ENCODE measurements at regions of chr17 and their contacts with region 1.

Region 1: DNA sequence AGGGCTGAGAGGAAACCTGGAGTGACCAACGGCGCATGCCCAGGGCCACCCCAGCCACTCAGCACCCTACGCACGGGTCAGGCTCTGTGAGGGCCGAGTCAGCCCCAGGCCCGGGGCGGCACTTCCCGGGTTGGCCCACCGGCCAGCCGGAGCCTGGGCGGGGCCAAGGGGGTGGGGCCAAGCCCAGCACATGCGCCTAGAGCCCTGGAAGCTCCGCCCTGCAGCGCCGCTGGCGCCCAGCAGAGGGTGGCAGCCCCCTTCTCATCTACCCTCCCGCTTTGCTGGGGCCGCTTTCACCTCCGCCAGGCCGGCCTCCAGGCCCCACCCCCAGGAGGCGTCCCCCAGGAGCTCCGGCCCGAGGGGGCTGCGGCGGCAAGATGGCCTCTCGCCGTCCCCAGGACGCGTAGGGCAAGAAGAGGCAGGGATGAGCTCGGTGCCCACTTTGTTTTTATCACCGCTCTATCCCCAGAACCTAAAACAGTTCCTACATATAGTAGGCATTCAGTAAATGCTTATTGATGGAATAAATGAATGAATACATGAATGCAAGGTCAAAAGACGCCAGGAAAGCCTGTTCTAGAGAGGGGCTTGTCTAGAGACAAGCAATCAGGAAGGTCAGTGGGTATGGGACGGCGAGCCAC is 31.3 kb downstream of the MYO18A start:
- DNase-seq: peak; percentile 95
- H3K4me3 ChIP-seq: peak overlapping the region; percentile 58
- H3K27ac ChIP-seq: peak overlapping the region; percentile 46
- H3K4me1 ChIP-seq: peaks cover 47% of the 10 kb centered on the region
- CTCF ChIP-seq: peak; percentile 85

Region 2: DNA sequence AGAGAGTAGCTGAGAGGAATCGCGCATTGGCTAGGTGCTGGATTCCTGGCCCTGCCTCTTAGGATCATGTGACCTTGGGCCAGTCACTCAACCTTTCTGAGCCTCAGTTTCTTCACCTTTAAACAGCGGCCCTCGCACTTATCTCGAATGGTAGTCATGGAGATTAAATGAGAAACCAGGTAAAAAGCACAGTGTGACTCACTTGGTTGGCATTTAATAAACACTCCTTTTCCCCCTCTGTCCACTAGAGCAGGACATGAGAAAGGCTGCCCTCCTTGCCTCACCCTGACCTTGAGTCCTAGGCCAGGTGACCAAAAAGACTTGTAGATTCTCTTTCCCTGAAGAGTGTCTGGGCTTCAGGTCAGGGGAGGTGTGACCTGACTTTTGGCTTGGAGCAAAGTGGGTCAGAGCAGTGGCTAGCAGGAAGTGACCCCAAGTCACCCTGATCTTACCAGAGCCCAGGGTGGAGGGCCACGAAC is 40.9 kb before region 1 on chr17:
- CTCF ChIA-PET with region 1: no interaction called
- POLR2A ChIA-PET with region 1: no interaction called
- intact Hi-C with region 1: no loop called
- DNase-seq: no peak
- H3K4me3 ChIP-seq: no peak overlapping the region
- H3K27ac ChIP-seq: no peak overlapping the region
- H3K4me1 ChIP-seq: no peaks in the 10 kb centered on the region
- CTCF ChIP-seq: no peak

Region 3: DNA sequence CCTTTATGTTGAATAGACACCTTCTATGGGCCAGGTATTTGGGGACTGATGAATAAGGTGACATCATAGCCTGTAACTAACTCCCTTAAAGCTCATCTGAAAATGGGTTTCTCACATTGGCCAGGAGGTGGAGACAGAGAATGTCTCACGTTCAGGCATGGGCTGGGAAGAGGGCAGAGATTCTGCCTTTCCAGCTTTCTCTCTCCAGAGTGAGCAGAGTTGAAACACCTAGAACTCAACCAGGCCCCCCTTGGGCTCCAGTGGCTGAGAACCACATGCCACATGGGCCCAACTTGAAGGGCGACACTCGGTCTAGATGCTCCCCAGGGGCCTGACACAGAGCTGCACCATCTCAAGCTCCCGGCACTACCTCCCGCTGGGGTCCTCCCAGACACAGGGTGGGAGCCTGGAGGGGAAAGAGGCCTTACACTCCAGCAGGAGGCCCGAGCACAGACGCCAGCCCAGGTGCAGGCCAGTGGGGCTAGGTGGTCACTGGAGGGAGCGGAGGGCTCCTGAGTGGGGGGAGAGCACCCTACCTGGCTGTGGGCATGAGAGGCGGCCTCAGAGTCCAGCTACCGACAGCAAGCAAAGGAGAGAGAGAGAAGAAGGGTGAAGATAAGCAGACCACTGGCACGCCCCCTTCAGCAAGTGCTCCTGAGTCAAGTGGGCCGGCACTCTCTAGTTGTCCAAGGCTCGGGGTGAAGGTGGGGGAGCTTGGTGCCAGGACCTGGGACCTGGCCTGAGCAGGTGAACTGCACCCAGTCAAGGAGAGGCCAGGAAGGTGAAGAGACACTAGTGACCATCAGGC is 24.6 kb before region 1 on chr17:
- CTCF ChIA-PET with region 1: interaction called, 10 read pairs
- POLR2A ChIA-PET with region 1: interaction called, 5 read pairs
- intact Hi-C with region 1: loop called (anchors 1 kb)
- DNase-seq: peak; percentile 71
- H3K4me3 ChIP-seq: no peak overlapping the region
- H3K27ac ChIP-seq: no peak overlapping the region
- H3K4me1 ChIP-seq: no peaks in the 10 kb centered on the region
- CTCF ChIP-seq: peak; percentile 84

Region 4: GRCh38 chr17:29169806-29170591 is 21.1 kb after region 1 on chr17:
- CTCF ChIA-PET with region 1: no interaction called
- POLR2A ChIA-PET with region 1: no interaction called
- intact Hi-C with region 1: no loop called
- DNase-seq: no peak
- H3K4me3 ChIP-seq: no peak overlapping the region
- H3K27ac ChIP-seq: no peak overlapping the region
- H3K4me1 ChIP-seq: no peaks in the 10 kb centered on the region
- CTCF ChIP-seq: no peak

Region 5: GRCh38 chr17:29180034-29180787 is 31.3 kb after region 1 on chr17 and contains the start of gene MYO18A:
- CTCF ChIA-PET with region 1: interaction called, 23 read pairs
- POLR2A ChIA-PET with region 1: interaction called, 8 read pairs
- intact Hi-C with region 1: loop called (anchors 1 kb)
- DNase-seq: peak; percentile 88
- H3K4me3 ChIP-seq: peak within 1 kb of the TSS; percentile 68
- H3K27ac ChIP-seq: no peak within 1 kb of the TSS
- H3K4me1 ChIP-seq: peaks cover 45% of the 10 kb centered on the region
- CTCF ChIP-seq: peak; percentile 79
- total RNA-seq, gene MYO18A: 124 and 131 TPM in 2 replicates

Region 6: DNA sequence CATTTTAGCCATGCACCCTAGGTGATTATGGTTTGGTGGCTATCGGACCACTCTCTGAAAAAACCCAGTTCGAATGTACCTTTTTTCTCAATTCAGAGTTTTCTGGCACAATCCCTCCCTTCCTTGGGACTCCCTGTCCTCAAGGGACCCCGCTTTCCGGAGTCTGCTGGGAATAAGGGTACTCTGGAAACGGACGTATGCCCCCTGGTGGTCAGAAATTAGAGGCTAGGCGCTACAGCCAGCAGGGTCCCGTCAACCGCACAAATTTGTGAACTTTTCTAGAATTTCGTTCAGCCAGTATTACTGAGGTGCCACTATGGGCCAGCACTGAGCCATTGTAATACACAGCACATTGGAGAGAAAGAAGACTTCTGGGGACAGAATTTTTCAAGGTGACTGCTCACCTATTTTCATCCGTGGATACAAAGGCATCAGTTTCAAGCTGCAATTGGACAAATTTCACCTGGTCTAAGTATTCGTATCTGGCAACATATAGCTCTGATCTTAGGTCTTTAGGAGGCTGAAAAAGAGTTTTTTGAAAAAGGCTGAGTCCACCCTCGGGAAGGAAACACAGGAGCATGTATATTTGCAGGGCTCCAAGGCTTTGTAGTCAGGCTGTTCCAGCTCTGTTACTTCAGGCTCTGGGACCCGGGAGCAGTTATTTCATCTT is 70.6 kb after region 1 on chr17:
- CTCF ChIA-PET with region 1: interaction called, 6 read pairs
- POLR2A ChIA-PET with region 1: interaction called, 5 read pairs
- intact Hi-C with region 1: loop called (anchors 1 kb)
- DNase-seq: peak; percentile 84
- H3K4me3 ChIP-seq: no peak overlapping the region
- H3K27ac ChIP-seq: no peak overlapping the region
- H3K4me1 ChIP-seq: peaks cover 14% of the 10 kb centered on the region
- CTCF ChIP-seq: peak; percentile 100

Region 7: GRCh38 chr17:29293890-29294579 is 145.1 kb after region 1 on chr17 and contains the start of gene NUFIP2:
- CTCF ChIA-PET with region 1: no interaction called
- POLR2A ChIA-PET with region 1: interaction called, 7 read pairs
- intact Hi-C with region 1: loop called (anchors 1 kb)
- DNase-seq: peak; percentile 99
- H3K4me3 ChIP-seq: peak within 1 kb of the TSS; percentile 95
- H3K27ac ChIP-seq: peak within 1 kb of the TSS; percentile 88
- H3K4me1 ChIP-seq: peaks cover 23% of the 10 kb centered on the region
- CTCF ChIP-seq: no peak
- total RNA-seq, gene NUFIP2: 36.0 and 37.1 TPM in 2 replicates

Region 8: DNA sequence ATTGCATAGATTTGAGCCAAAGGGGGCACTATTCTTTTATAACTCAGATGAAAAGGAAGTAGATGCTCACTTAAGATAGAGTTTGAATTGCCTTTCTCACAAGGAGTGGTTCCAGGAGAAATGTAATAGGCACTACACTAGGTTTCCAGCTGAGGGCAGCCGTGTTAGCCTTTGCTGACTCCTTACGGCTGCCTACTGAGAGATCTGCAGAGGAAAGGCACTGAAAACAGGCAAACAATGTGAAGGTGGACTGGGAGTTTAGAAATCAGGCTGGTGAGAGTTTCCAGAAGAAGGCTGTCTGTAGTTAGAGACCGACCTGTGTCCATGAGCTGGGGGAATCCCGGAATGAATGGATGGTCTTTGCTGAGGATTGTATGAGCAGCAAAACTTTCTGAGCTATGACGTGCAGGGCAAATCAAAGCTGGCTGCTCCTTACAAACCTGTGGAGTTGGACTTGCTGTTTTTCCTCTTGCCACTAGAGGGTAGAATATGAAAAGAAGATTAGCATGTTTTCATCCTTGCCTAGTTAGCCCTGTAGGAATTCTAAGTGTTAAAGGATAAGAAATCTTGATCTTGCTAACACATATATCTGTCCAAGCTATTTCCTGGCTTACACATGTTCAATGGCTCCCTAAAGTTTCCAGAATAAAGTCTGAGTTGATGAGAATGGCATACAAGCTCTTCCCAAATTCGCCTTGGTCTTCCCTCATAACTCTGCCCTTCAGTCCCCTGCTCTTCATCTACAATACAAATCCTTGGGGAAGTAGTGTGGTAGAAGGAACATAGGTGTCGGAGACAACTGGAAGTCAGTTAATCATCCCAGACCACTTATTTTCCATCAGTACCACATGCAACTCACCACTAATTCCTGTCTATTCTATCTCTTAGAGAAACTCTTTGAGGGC is 221.2 kb after region 1 on chr17:
- CTCF ChIA-PET with region 1: interaction called, 3 read pairs
- POLR2A ChIA-PET with region 1: no interaction called
- intact Hi-C with region 1: loop called (anchors 10 kb)
- DNase-seq: peak; percentile 86
- H3K4me3 ChIP-seq: peak overlapping the region; percentile 43
- H3K27ac ChIP-seq: no peak overlapping the region
- H3K4me1 ChIP-seq: no peaks in the 10 kb centered on the region
- CTCF ChIP-seq: peak; percentile 96

Region 9: GRCh38 chr17:29568331-29569244 is 419.7 kb after region 1 on chr17 and contains the start of gene TP53I13:
- CTCF ChIA-PET with region 1: no interaction called
- POLR2A ChIA-PET with region 1: no interaction called
- intact Hi-C with region 1: loop called (anchors 10 kb)
- DNase-seq: peak; percentile 93
- H3K4me3 ChIP-seq: peak within 1 kb of the TSS; percentile 72
- H3K27ac ChIP-seq: peak within 1 kb of the TSS; percentile 68
- H3K4me1 ChIP-seq: peaks cover 29% of the 10 kb centered on the region
- CTCF ChIP-seq: no peak
- total RNA-seq, gene TP53I13: 27.5 and 30.9 TPM in 2 replicates

Measured in OCI-LY7 (cell line).